Breast epithelium (tissue), 4 donors: ENCODE measurements at regions of chr21 and their contacts with region 1.

Region 1: GRCh38 chr21:33894736-33895288 is 20.8 kb downstream of the ATP5PO start:
- DNase-seq: peak; percentile 35 to 63
- H3K4me3 ChIP-seq: peak overlapping the region; percentile 20 to 60 (median 33)
- H3K27ac ChIP-seq: no peak overlapping the region
- H3K4me1 ChIP-seq: peaks cover 0 to 4% of the 10 kb centered on the region in 2 donors
- H3K27me3 ChIP-seq: no peaks in the 10 kb centered on the region
- CTCF ChIP-seq: peak in 2 of 3 donors; percentile 50 to 59
- POLR2A ChIP-seq: no peak

Region 2: GRCh38 chr21:33641336-33642026 is 253.3 kb before region 1 on chr21 and contains the start of gene CRYZL1:
- intact Hi-C with region 1: loop called (anchors 10 kb)
- DNase-seq: peak; percentile 100
- H3K4me3 ChIP-seq: peak within 1 kb of the TSS; percentile 88 to 98 (median 94)
- H3K27ac ChIP-seq: peak within 1 kb of the TSS; percentile 93 to 96
- H3K4me1 ChIP-seq: peaks cover 0 to 3% of the 10 kb centered on the region in 2 donors
- H3K27me3 ChIP-seq: no peaks in the 10 kb centered on the region
- CTCF ChIP-seq: no peak
- POLR2A ChIP-seq: peak; percentile 49
- total RNA-seq, gene CRYZL1: 24.9 to 49.4 (median 47.6) TPM

Region 3: DNA sequence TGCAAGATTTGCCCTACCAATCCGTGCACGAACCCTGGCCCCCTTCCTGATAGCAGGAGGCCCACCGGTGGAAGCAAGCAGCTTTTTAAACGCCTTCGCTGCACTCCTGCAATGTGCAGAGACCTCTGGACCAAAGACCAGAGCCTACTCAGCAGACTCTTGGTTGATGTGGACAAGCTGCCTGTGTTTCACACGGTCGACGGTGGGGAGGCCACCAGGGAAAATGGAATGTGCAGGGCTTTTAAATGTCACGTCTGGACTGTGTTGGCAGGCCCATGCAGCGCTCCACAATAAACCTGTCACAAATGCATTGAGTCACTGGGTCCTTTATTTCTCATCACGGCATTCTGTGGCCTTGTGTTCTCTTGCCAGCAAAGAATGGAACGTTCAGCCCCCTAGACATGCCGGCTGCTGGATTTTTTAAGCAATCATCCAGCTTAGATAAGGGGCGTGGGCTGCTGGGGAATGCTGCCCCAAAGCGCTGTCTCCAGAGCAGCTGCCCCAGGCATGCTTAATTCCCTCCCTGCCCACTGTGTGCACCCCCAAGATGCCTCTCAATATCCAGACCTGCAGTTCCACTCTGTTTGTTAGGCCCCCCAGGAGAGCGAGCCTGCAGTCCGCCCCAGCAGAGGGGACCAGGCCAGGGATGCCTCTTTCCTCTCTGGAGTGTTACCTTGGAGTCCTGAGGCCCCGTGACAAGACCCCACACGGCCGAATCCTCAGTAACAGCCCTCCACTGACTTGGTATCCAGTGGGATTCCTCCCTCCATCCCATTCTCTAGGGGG is 50.5 kb before region 1 on chr21:
- intact Hi-C with region 1: no loop called
- DNase-seq: no peak
- H3K4me3 ChIP-seq: no peak overlapping the region
- H3K27ac ChIP-seq: no peak overlapping the region
- H3K4me1 ChIP-seq: no peaks in the 10 kb centered on the region
- H3K27me3 ChIP-seq: no peaks in the 10 kb centered on the region
- CTCF ChIP-seq: no peak
- POLR2A ChIP-seq: no peak

Region 4: GRCh38 chr21:33881689-33882440 is 12.9 kb before region 1 on chr21:
- intact Hi-C with region 1: no loop called
- DNase-seq: no peak
- H3K4me3 ChIP-seq: no peak overlapping the region
- H3K27ac ChIP-seq: no peak overlapping the region
- H3K4me1 ChIP-seq: peaks cover 0 to 4% of the 10 kb centered on the region in 2 donors
- H3K27me3 ChIP-seq: no peaks in the 10 kb centered on the region
- CTCF ChIP-seq: no peak
- POLR2A ChIP-seq: no peak

Region 5: DNA sequence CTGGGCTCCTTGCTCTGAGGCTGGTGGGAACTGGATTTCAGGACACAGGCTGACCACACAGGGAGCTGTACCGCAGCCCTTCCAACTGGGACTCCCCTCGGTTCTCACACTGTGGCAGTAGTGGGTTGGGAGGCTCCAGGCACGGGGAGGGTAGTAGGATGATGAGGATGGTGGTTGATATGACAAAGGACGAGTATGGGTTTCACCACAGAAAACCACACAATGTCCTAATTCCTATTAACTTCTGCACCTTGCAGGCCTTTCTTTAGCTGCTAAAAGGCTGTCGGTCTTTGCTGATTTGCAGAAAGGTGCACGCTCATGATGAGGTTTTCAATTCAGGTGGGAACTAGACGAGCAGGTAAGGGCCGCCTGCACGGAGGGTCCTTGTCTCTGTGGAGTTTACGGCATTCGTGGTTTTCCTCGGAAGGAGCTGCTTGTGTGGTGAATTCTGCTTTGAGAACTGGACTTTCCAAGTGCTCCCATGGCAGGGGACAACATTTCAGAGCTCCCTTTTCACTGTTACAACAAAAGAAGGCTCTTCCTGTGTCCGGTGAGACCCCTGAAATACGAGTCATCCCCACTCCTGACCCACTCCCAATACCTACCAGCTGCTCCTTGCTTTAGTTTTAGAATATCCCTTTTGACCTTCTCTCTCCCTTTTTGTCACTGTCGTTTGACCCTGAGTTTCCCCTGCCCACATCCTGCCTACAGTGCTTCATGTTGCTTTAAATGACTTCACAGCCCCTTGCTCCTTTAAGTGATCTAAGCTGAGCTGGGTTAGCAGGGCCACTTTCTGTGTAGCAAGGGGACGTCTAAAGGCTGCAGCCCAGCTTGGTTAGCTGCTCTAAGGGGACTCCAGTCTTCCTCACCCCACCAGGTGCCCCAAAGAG is 303.7 kb after region 1 on chr21:
- intact Hi-C with region 1: no loop called
- DNase-seq: no peak
- H3K4me3 ChIP-seq: no peak overlapping the region
- H3K27ac ChIP-seq: no peak overlapping the region
- H3K4me1 ChIP-seq: no peaks in the 10 kb centered on the region
- H3K27me3 ChIP-seq: no peaks in the 10 kb centered on the region
- CTCF ChIP-seq: no peak
- POLR2A ChIP-seq: no peak